ENCODE measurements at regions of chr14 and their contacts with region 1.

Region 1: DNA sequence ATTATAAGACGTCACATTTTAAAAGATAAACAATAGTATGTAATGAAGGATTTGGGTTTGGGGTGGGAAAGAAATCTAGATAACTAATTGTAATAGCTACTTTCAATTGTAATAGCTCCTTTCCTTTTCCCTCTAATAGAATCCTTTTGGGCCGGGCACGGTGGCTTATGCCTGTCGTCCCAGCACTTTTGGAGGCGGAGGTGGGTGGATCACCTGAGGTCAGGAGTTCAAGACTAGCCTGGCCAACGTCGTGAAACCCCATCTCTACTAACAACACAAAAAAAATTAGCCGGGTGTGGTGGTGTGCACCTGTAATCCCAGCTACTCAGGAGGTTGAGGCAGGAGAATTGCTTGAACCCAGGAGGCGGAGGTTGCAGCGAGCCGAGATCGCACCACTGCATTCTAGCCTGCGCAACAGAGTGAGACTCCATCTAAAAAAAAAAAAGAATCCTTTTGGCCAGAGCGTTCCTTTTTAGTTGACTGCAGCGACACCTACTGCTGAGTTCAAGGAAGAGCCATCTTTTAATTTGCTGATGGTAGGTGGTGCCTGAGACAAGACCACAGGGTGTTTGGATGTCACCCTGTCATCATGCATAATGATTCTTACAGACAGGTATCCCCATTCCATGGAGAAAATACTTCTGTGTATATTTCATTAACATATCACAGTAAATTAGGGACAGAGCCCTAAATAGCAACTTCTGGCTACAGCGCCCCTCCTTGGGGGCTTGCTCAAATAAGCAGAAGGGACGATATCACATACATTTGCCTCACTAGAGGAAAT is 79.5 kb downstream of the ARMH4 start:
- DNase-seq: peak; percentile 46
- CTCF ChIP-seq: peak; percentile 62

Region 2: GRCh38 chr14:57519051-57519450 is 553.4 kb before region 1 on chr14:
- in situ Hi-C with region 1: no loop called
- DNase-seq: no peak
- CTCF ChIP-seq: no peak

Region 3: GRCh38 chr14:57533214-57533613 is 539.3 kb before region 1 on chr14:
- in situ Hi-C with region 1: loop called (anchors 25 kb)
- DNase-seq: no peak
- CTCF ChIP-seq: no peak

Region 4: DNA sequence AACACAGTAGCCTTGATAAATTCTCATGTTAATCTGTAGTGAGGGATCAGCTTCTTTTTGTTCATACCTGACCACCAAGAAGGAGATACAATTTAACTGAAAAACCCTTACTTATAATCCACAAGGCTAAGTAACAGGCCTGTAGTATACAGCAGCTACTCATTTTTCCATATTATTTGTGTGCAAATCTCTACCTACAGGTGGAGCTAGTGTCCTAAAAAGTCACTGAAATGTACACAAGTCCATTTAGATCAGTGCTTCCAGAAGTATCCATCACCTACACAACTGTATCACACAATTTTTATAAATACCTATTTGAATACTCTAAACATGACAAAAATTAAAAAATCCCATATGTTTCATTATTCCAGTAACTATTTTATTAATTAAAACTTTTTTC is 379.8 kb before region 1 on chr14:
- in situ Hi-C with region 1: loop called (anchors 25 kb)
- DNase-seq: peak; percentile 11
- CTCF ChIP-seq: no peak

Region 5: DNA sequence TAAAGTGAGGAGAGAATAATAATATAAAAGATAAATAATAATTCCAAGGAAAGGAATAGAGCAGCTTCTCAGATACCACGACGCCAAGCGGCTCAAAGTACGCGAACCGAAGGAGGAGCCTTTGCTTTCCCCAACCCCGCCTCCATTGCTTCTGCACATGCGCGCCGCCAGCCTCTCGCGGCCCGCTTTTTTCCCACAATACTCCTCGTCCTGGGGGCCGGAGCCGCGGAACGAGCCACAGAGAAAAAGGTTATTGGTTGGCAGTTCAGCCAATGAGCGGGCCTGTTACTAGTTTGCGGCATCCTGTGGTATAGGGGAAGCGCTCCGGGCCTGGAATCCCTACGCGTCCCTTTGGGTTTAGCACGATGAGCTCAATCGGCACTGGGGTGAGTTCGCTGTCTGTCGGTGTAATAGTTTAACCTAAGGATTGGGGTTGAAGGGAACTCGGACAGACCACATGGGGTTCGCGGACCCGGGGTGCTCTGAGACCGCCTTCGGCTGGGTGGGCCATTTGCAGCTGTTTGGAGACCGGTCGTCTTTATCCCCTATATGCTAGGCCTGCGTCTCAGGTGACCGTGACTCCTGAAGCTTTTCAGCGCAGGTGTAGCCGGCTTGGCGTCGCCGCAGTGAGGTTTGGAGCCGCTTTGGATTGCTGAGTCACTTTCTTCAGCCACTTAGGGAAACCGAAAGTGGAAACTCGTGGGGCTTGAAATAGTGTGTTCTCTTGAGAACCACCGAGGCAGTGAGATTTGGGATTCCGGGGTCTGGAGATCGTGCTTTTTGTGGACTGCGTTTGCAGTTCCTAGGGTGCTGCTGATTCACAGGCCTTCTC is 172.3 kb after region 1 on chr14 and contains the start of gene PSMA3:
- in situ Hi-C with region 1: no loop called
- DNase-seq: peak; percentile 93
- CTCF ChIP-seq: no peak

Measured in GM13976 (cell line).